ENCODE measurements at regions of chr17 and their contacts with region 1.

Region 1: DNA sequence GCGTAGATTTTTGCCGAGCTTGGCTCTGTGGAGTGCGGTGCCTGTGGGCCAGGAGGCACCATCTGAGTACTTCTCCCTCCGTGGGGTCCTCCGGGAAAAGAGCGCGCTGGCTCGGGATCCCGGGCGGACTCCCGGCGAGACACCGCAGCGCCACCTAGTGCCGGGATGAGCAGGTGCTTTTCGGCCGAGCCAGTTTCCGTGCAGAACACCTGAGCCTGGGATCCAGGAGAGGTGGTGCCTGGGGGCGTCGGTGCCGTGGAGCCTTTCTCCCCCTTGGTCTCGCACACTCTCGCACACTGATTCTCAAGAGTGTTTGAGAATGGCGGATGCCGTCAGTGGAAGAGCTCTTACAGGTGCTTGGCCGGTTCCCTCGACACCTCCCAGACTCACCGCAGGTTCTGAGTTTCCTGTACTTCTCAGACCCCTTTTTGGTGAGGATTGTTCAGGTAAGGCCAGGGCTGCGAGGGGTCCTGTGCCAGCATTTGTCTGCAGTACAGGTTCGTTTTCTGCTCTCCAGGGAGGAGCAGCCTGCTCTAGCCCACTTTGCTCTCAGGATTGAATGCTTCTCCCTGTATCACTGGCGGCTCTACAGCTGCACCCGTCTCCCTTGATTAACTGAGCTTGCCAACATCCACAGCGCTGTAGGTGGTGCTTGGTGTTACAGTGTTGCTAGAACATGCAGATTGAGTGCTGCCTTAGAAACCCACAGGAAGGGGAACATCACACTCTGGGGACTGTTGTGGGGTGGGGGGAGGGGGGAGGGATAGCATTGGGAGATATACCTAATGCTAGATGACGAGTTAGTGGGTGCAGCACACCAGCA is 23.3 kb downstream of the TBCD start:
- DNase-seq: no peak
- H3K4me3 ChIP-seq: peak overlapping the region in 3 of 4 donors; percentile 15 to 38 (median 38)
- H3K27ac ChIP-seq: no peak overlapping the region
- H3K4me1 ChIP-seq: peaks cover 4 to 13% (median 9%) of the 10 kb centered on the region in 4 donors
- H3K27me3 ChIP-seq: no peaks in the 10 kb centered on the region
- CTCF ChIP-seq: peak; percentile 72 to 93 (median 83)
- EP300 ChIP-seq: no peak
- POLR2A ChIP-seq: no peak

Region 2: GRCh38 chr17:82351716-82352488 is 423.3 kb before region 1 on chr17:
- intact Hi-C with region 1: loop called (anchors 5 kb)
- DNase-seq: peak; percentile 96
- H3K4me3 ChIP-seq: no peak overlapping the region
- H3K27ac ChIP-seq: no peak overlapping the region
- H3K4me1 ChIP-seq: peaks cover 6 to 23% (median 17%) of the 10 kb centered on the region in 4 donors
- H3K27me3 ChIP-seq: peaks cover 0 to 27% (median 0%) of the 10 kb centered on the region in 4 donors
- CTCF ChIP-seq: peak; percentile 91 to 95 (median 94)
- EP300 ChIP-seq: no peak
- POLR2A ChIP-seq: no peak

Region 3: DNA sequence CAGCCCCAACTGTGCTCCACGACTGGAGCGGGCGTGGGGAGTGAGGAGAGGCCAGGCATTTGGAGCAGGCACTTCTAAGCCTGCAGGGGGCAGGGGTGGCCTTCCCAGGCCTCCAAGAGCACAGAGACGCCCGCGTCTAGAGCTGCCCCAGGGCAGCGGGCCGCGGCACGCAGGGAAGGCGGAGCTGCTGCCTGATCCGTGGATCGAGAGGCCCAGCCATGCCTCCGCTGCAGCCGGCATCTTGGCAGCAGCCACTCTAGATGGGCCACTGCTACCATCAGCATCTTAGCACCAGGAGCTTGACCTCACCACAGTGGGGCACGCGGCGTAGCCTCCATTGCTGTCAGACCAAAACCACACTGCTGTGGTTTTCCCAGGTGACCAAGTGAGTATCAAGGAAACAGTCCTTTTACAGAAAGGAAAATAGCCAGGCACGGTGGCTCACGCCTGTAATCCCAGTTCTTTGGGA is 106.5 kb before region 1 on chr17:
- intact Hi-C with region 1: loop called (anchors 2 kb)
- DNase-seq: no peak
- H3K4me3 ChIP-seq: peak overlapping the region in 1 of 4 donors; percentile 20
- H3K27ac ChIP-seq: peak overlapping the region in 2 of 4 donors; percentile 49 to 52
- H3K4me1 ChIP-seq: peaks cover 7 to 17% (median 11%) of the 10 kb centered on the region in 4 donors
- H3K27me3 ChIP-seq: no peaks in the 10 kb centered on the region
- CTCF ChIP-seq: peak; percentile 51 to 73 (median 64)
- EP300 ChIP-seq: no peak
- POLR2A ChIP-seq: no peak